Aorta (tissue), 5 donors: ENCODE measurements at regions of chr7 and their contacts with region 1.

Region 1: DNA sequence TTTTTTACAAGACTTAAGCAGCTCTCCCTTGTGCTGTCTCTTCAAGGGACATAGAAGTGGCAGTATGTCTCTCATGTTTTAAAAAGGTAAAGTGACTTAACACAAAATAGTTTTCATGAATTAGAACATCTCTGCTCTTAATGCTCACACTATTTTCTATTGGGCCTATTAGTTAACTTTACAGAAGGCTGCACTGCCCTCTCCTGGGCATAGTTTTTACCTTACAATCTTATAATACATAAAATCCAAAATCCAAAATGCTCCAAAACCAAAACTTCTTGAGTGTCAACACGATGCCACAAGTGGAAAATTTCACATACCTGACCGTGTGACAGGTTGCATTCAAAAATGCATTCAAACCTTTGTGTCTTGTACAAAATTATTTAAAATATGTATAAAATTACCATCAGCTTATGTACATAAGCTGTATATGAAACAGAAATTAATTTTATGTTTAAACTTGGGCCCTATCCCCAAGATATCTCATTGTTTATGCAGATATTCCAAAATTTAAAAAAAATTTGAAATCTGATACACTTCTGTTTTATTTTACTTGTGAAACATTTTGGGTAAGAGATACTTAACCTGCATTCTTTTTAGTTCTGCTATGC is 25.8 kb downstream of the TES start:
- DNase-seq: no peak
- ATAC-seq: no peak
- H3K4me3 ChIP-seq: no peak overlapping the region
- H3K27ac ChIP-seq: no peak overlapping the region
- H3K4me1 ChIP-seq: peaks cover 8 to 15% of the 10 kb centered on the region in 2 donors
- H3K27me3 ChIP-seq: no peaks in the 10 kb centered on the region

Region 2: GRCh38 chr7:116180302-116180701 is 55.8 kb before region 1 on chr7:
- intact Hi-C with region 1: loop called (anchors 1 to 2 kb)
- DNase-seq: no peak
- ATAC-seq: peak; percentile 68
- H3K4me3 ChIP-seq: no peak overlapping the region
- H3K27ac ChIP-seq: no peak overlapping the region
- H3K4me1 ChIP-seq: peaks cover 0 to 6% of the 10 kb centered on the region in 2 donors
- H3K27me3 ChIP-seq: no peaks in the 10 kb centered on the region